ENCODE measurements at regions of chr12 and their contacts with region 1.

Region 1: GRCh38 chr12:33439282-33440011 is at the start of gene SYT10:
- DNase-seq: peak; percentile 20
- H3K4me3 ChIP-seq: peak within 1 kb of the TSS; percentile 31
- H3K27ac ChIP-seq: no peak within 1 kb of the TSS
- H3K4me1 ChIP-seq: no peaks in the 10 kb centered on the region
- H3K27me3 ChIP-seq: peaks cover 37% of the 10 kb centered on the region
- CTCF ChIP-seq: no peak
- total RNA-seq, gene SYT10: not detected in 2 replicates

Region 2: GRCh38 chr12:33605751-33606150 is 166.3 kb after region 1 on chr12:
- CTCF ChIA-PET with region 1: interaction called, 12 read pairs
- POLR2A ChIA-PET with region 1: no interaction called
- intact Hi-C with region 1: no loop called
- DNase-seq: peak; percentile 32
- H3K4me3 ChIP-seq: no peak overlapping the region
- H3K27ac ChIP-seq: no peak overlapping the region
- H3K4me1 ChIP-seq: no peaks in the 10 kb centered on the region
- H3K27me3 ChIP-seq: no peaks in the 10 kb centered on the region
- CTCF ChIP-seq: 0 out of 2 replicates have a peak, but pooled peaks have one; percentile 28

Measured in A673 (cell line).